ENCODE measurements at regions of chr4 and their contacts with region 1.

Region 1: GRCh38 chr4:153560908-153561307 is 94.7 kb downstream of the TMEM131L start:
- DNase-seq: no peak
- ATAC-seq: peak; percentile 74
- H3K4me3 Mint-ChIP-seq: no peak overlapping the region
- H3K27ac Mint-ChIP-seq: peak overlapping the region; percentile 51
- H3K4me1 Mint-ChIP-seq: peaks cover 42% of the 10 kb centered on the region
- H3K27me3 Mint-ChIP-seq: no peaks in the 10 kb centered on the region
- CTCF ChIP-seq: no peak

Region 2: GRCh38 chr4:153549401-153549800 is 11.5 kb before region 1 on chr4:
- CTCF ChIA-PET with region 1: no interaction called
- POLR2A ChIA-PET with region 1: no interaction called
- intact Hi-C with region 1: loop called (anchors 2 kb)
- DNase-seq: no peak
- ATAC-seq: no peak
- H3K4me3 Mint-ChIP-seq: no peak overlapping the region
- H3K27ac Mint-ChIP-seq: peak overlapping the region; percentile 15
- H3K4me1 Mint-ChIP-seq: peaks cover 43% of the 10 kb centered on the region
- H3K27me3 Mint-ChIP-seq: no peaks in the 10 kb centered on the region
- CTCF ChIP-seq: no peak

Region 3: DNA sequence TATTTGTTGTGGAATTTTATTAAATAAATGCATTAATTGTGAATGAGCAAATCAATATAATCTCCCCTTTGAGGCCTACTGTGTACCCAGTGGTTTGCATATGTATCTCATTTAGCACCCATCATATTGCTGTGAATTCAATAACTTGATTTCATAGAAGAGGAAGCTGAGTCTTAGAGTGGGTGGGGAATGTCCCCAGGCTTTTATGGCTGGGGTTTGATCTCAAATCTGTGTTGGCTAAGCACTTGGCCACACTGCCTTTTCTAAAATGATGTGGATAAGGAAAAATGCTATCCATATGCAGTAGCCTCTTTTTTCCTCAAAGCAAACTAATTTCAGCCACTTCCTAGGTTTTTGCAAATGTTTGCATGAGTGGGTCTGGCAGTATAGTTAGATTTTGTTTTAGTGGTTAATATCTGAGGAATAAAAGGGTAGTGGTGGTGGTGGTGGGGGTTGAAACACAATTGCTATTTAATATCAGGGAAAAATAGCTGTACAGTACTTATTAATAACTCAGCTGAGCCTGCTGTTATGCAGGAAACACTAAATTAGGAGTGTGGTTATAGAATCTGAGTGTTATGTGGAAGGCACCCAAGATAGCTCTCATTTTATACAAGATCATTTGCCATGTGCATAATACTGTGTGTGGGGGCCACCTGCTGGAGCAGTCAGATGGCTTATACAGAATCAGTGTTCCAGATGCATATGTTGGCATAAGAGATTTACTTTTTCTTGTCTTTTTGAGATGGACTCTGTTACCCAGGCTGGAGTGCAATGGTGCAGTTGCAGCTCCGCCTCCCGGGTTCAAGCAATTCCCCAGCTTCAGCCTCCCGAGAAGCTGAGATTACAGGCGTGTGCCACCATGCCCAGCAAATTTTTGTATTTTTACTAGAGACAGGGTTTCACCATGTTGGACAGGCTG is 13.2 kb after region 1 on chr4:
- CTCF ChIA-PET with region 1: interaction called, 4 read pairs
- POLR2A ChIA-PET with region 1: no interaction called
- intact Hi-C with region 1: loop called (anchors 2 kb)
- DNase-seq: no peak
- ATAC-seq: peak; percentile 78
- H3K4me3 Mint-ChIP-seq: peak overlapping the region; percentile 32
- H3K27ac Mint-ChIP-seq: peak overlapping the region; percentile 82
- H3K4me1 Mint-ChIP-seq: peaks cover 77% of the 10 kb centered on the region
- H3K27me3 Mint-ChIP-seq: no peaks in the 10 kb centered on the region
- CTCF ChIP-seq: no peak